ENCODE measurements at regions of chr5 and their contacts with region 1.

Region 1: GRCh38 chr5:68252673-68253623 is 37.4 kb downstream of the PIK3R1 start:
- DNase-seq: peak; percentile 80
- H3K4me3 ChIP-seq: no peak overlapping the region
- H3K27ac ChIP-seq: peak overlapping the region in 7 of 8 donors; percentile 8 to 75 (median 65)
- H3K4me1 ChIP-seq: peaks cover 37 to 100% (median 97%) of the 10 kb centered on the region in 6 donors
- H3K27me3 ChIP-seq: no peaks in the 10 kb centered on the region
- CTCF ChIP-seq: peak in 10 of 11 experiments; percentile 50 to 84 (median 69)
- POLR2A ChIP-seq: no peak

Region 2: DNA sequence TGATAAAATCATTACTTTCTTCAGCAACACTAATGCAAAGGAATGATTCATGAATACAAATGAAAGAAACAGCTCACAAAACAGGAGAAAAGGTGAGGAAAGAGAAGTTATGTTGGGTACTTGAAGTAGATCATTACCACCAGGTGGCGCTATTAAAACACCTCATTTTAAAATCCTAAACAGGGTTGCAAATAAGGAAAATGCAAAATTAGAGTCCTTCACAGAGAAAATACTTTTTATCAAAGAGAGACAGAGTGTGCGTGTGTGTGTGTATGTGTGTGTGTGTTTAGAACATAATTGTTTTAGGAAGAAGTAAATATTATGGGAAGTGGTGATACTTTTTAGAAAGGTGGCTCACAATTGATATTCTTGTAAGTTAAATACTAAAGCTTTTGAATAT is 1006.8 kb before region 1 on chr5:
- intact Hi-C with region 1: loop called (anchors 10 kb)
- DNase-seq: no peak
- H3K4me3 ChIP-seq: no peak overlapping the region
- H3K27ac ChIP-seq: no peak overlapping the region
- H3K4me1 ChIP-seq: peaks cover 0 to 22% (median 11%) of the 10 kb centered on the region in 6 donors
- H3K27me3 ChIP-seq: no peaks in the 10 kb centered on the region
- CTCF ChIP-seq: peak; percentile 45 to 86 (median 76)
- POLR2A ChIP-seq: no peak

Region 3: GRCh38 chr5:68149189-68149588 is 103.8 kb before region 1 on chr5:
- intact Hi-C with region 1: no loop called
- DNase-seq: no peak
- H3K4me3 ChIP-seq: no peak overlapping the region
- H3K27ac ChIP-seq: no peak overlapping the region
- H3K4me1 ChIP-seq: no peaks in the 10 kb centered on the region
- H3K27me3 ChIP-seq: no peaks in the 10 kb centered on the region
- CTCF ChIP-seq: no peak
- POLR2A ChIP-seq: no peak

Measured in spleen (tissue), 13 donors.